Endothelial cell of umbilical vein (primary cell): ENCODE measurements at regions of chr12 and their contacts with region 1.

Region 1: GRCh38 chr12:65313719-65314317 is 35.3 kb downstream of the MSRB3 start:
- DNase-seq: peak; percentile 48
- H3K4me3 ChIP-seq: no peak overlapping the region
- H3K27ac ChIP-seq: no peak overlapping the region
- H3K4me1 ChIP-seq: peaks cover 13% of the 10 kb centered on the region
- H3K27me3 ChIP-seq: no peaks in the 10 kb centered on the region
- CTCF ChIP-seq: peak; percentile 13 to 14
- POLR2A ChIP-seq: no peak

Region 2: GRCh38 chr12:65300680-65301349 is 13.0 kb before region 1 on chr12:
- CTCF ChIA-PET with region 1: interaction called, 13 read pairs
- POLR2A ChIA-PET with region 1: no interaction called
- dilution Hi-C with region 1: no loop called
- intact Hi-C with region 1: no loop called
- DNase-seq: no peak
- H3K4me3 ChIP-seq: no peak overlapping the region
- H3K27ac ChIP-seq: no peak overlapping the region
- H3K4me1 ChIP-seq: peaks cover 7% of the 10 kb centered on the region
- H3K27me3 ChIP-seq: no peaks in the 10 kb centered on the region
- CTCF ChIP-seq: peak; percentile 28 to 42
- POLR2A ChIP-seq: no peak

Region 3: GRCh38 chr12:65673732-65674131 is 359.9 kb after region 1 on chr12:
- CTCF ChIA-PET with region 1: interaction called, 4 read pairs
- POLR2A ChIA-PET with region 1: no interaction called
- dilution Hi-C with region 1: no loop called
- intact Hi-C with region 1: loop called (anchors 5 kb)
- DNase-seq: peak; percentile 50
- H3K4me3 ChIP-seq: no peak overlapping the region
- H3K27ac ChIP-seq: no peak overlapping the region
- H3K4me1 ChIP-seq: peaks cover 12% of the 10 kb centered on the region
- H3K27me3 ChIP-seq: no peaks in the 10 kb centered on the region
- CTCF ChIP-seq: peak in 1 of 2 donors; percentile 2
- POLR2A ChIP-seq: no peak

Region 4: GRCh38 chr12:65685514-65685913 is 371.7 kb after region 1 on chr12:
- CTCF ChIA-PET with region 1: no interaction called
- POLR2A ChIA-PET with region 1: no interaction called
- dilution Hi-C with region 1: no loop called
- intact Hi-C with region 1: loop called (anchors 1 kb)
- DNase-seq: peak; percentile 63
- H3K4me3 ChIP-seq: no peak overlapping the region
- H3K27ac ChIP-seq: no peak overlapping the region
- H3K4me1 ChIP-seq: no peaks in the 10 kb centered on the region
- H3K27me3 ChIP-seq: no peaks in the 10 kb centered on the region
- CTCF ChIP-seq: peak; percentile 52 to 63
- POLR2A ChIP-seq: no peak

Region 5: DNA sequence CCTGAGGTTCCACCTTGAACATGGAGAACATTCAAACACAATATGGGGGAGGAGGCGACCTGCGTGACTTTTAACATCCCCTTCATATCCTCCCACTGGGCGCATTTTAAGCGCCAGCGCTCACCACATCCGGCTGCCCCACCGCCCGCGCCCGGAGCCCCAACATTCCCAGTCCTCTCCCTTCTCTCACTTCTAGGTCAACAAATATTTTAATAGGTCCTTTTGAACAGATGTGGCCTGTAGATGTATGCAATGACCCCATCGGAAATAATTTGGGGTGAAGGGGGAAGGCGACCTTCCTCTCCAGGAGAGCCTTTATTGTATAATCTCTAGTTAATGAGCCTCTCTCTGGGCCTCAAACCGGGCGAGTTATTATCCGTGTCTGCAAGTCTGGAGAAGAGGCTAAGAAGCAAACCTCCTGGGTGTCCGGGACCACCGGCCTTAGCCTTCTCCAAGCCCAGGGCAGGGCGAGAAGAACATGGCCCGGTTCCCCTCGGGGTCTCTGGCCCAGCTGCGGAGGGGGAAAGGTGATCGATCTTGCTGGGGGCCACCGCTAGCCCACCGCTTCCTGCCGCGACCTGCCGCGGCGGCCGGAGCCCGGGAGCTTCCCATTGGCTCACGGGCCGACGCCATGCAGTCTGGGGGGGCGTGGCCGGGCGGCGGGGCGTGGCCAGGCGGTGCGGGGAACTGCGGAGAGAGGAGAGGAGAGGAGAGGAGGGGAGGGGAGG is 427.2 kb after region 1 on chr12:
- CTCF ChIA-PET with region 1: interaction called, 3 read pairs
- POLR2A ChIA-PET with region 1: no interaction called
- dilution Hi-C with region 1: no loop called
- intact Hi-C with region 1: loop called (anchors 2 kb)
- DNase-seq: peak; percentile 82
- H3K4me3 ChIP-seq: peak overlapping the region; percentile 75 to 88 (median 81)
- H3K27ac ChIP-seq: peak overlapping the region; percentile 77
- H3K4me1 ChIP-seq: peaks cover 5% of the 10 kb centered on the region
- H3K27me3 ChIP-seq: no peaks in the 10 kb centered on the region
- CTCF ChIP-seq: no peak
- POLR2A ChIP-seq: no peak

Region 6: DNA sequence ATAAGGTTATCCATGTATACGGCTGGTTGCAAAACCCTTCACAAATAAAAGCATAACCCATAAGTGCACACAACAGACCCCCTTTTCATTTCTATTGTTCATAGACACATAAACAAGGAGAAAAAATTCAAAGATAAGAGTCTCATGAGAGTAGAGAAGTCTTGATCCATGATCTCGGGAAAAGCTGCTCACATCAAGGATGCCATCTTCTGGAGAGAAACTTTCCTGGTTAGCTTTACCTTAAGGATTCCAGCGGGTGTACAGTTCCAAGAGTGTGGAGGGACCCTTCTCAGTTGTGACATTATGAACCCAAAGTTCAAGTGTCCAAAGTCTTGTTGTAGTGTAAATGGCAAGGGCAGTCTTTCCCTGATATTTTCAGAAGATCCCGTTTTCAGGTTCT is 672.2 kb after region 1 on chr12:
- CTCF ChIA-PET with region 1: interaction called, 3 read pairs
- POLR2A ChIA-PET with region 1: no interaction called
- dilution Hi-C with region 1: no loop called
- intact Hi-C with region 1: loop called (anchors 2 kb)
- DNase-seq: peak; percentile 28
- H3K4me3 ChIP-seq: no peak overlapping the region
- H3K27ac ChIP-seq: no peak overlapping the region
- H3K4me1 ChIP-seq: no peaks in the 10 kb centered on the region
- H3K27me3 ChIP-seq: no peaks in the 10 kb centered on the region
- CTCF ChIP-seq: peak in 1 of 2 donors; percentile 12
- POLR2A ChIP-seq: no peak

Region 7: GRCh38 chr12:66035288-66035966 is 721.6 kb after region 1 on chr12:
- CTCF ChIA-PET with region 1: no interaction called
- POLR2A ChIA-PET with region 1: no interaction called
- dilution Hi-C with region 1: no loop called
- intact Hi-C with region 1: loop called (anchors 2 kb)
- DNase-seq: peak; percentile 71
- H3K4me3 ChIP-seq: no peak overlapping the region
- H3K27ac ChIP-seq: no peak overlapping the region
- H3K4me1 ChIP-seq: peaks cover 10% of the 10 kb centered on the region
- H3K27me3 ChIP-seq: peaks cover 1 to 3% of the 10 kb centered on the region in 2 experiments
- CTCF ChIP-seq: peak; percentile 26 to 35
- POLR2A ChIP-seq: no peak